IMR-90 (cell line): ENCODE measurements at regions of chrX and their contacts with region 1.

Region 1: GRCh38 chrX:11533211-11533651 is 132.5 kb downstream of the ARHGAP6 start:
- DNase-seq: peak; percentile 89
- ATAC-seq: peak; percentile 89
- H3K4me3 ChIP-seq: no peak overlapping the region
- H3K27ac ChIP-seq: no peak overlapping the region
- H3K4me1 ChIP-seq: peaks cover 2% of the 10 kb centered on the region; the same call in 1 of the 2 replicates
- H3K27me3 ChIP-seq: no peaks in the 10 kb centered on the region
- CTCF ChIP-seq: peak; percentile 99
- POLR2A ChIP-seq: no peak
- RAD21 ChIP-seq: peak; percentile 71

Region 2: GRCh38 chrX:11143931-11144678 is 389.1 kb before region 1 on chrX:
- CTCF ChIA-PET with region 1: interaction called, 4 read pairs
- POLR2A ChIA-PET with region 1: no interaction called
- dilution Hi-C with region 1: no loop called
- in situ Hi-C with region 1: loop called (anchors 5 kb)
- intact Hi-C with region 1: loop called (anchors 1 kb)
- DNase-seq: peak; percentile 79
- ATAC-seq: peak; percentile 90
- H3K4me3 ChIP-seq: no peak overlapping the region
- H3K27ac ChIP-seq: no peak overlapping the region
- H3K4me1 ChIP-seq: no peaks in the 10 kb centered on the region
- H3K27me3 ChIP-seq: no peaks in the 10 kb centered on the region
- CTCF ChIP-seq: peak; percentile 71
- POLR2A ChIP-seq: no peak
- RAD21 ChIP-seq: peak; percentile 83

Region 3: GRCh38 chrX:11381464-11381863 is 151.8 kb before region 1 on chrX:
- CTCF ChIA-PET with region 1: interaction called, 8 read pairs
- POLR2A ChIA-PET with region 1: no interaction called
- dilution Hi-C with region 1: no loop called
- in situ Hi-C with region 1: no loop called
- intact Hi-C with region 1: loop called (anchors 1 kb)
- DNase-seq: peak; percentile 63
- ATAC-seq: peak; percentile 75
- H3K4me3 ChIP-seq: no peak overlapping the region
- H3K27ac ChIP-seq: no peak overlapping the region
- H3K4me1 ChIP-seq: peaks cover 3% of the 10 kb centered on the region
- H3K27me3 ChIP-seq: no peaks in the 10 kb centered on the region
- CTCF ChIP-seq: peak; percentile 58
- POLR2A ChIP-seq: no peak
- RAD21 ChIP-seq: peak; percentile 58

Region 4: GRCh38 chrX:11461201-11462001 is 71.8 kb before region 1 on chrX:
- CTCF ChIA-PET with region 1: no interaction called
- POLR2A ChIA-PET with region 1: no interaction called
- dilution Hi-C with region 1: no loop called
- in situ Hi-C with region 1: no loop called
- intact Hi-C with region 1: loop called (anchors 2 kb)
- DNase-seq: peak; percentile 78
- ATAC-seq: peak; percentile 88
- H3K4me3 ChIP-seq: no peak overlapping the region
- H3K27ac ChIP-seq: peak overlapping the region; percentile 88
- H3K4me1 ChIP-seq: peaks cover 4% of the 10 kb centered on the region
- H3K27me3 ChIP-seq: no peaks in the 10 kb centered on the region
- CTCF ChIP-seq: no peak
- POLR2A ChIP-seq: no peak
- RAD21 ChIP-seq: peak; percentile 3; the same call in 1 of the 2 replicates

Region 5: GRCh38 chrX:11665144-11666111 is 132.2 kb after region 1 on chrX and contains the start of gene ARHGAP6:
- CTCF ChIA-PET with region 1: no interaction called
- POLR2A ChIA-PET with region 1: no interaction called
- dilution Hi-C with region 1: no loop called
- in situ Hi-C with region 1: no loop called
- intact Hi-C with region 1: loop called (anchors 10 kb)
- DNase-seq: peak; percentile 20
- ATAC-seq: peak; percentile 78
- H3K4me3 ChIP-seq: peak within 1 kb of the TSS; percentile 31
- H3K27ac ChIP-seq: no peak within 1 kb of the TSS
- H3K4me1 ChIP-seq: no peaks in the 10 kb centered on the region
- H3K27me3 ChIP-seq: peaks cover 16% of the 10 kb centered on the region
- CTCF ChIP-seq: no peak
- POLR2A ChIP-seq: no peak
- RAD21 ChIP-seq: no peak
- total RNA-seq, gene ARHGAP6: 1.1 and 1.8 TPM in 2 replicates

Region 6: GRCh38 chrX:11724122-11725017 is 191.1 kb after region 1 on chrX:
- CTCF ChIA-PET with region 1: interaction called, 3 read pairs
- POLR2A ChIA-PET with region 1: no interaction called
- dilution Hi-C with region 1: no loop called
- in situ Hi-C with region 1: loop called (anchors 5 kb)
- intact Hi-C with region 1: loop called (anchors 1 kb)
- DNase-seq: peak; percentile 41
- ATAC-seq: peak; percentile 70
- H3K4me3 ChIP-seq: no peak overlapping the region
- H3K27ac ChIP-seq: no peak overlapping the region
- H3K4me1 ChIP-seq: no peaks in the 10 kb centered on the region
- H3K27me3 ChIP-seq: no peaks in the 10 kb centered on the region
- CTCF ChIP-seq: peak; percentile 78
- POLR2A ChIP-seq: no peak
- RAD21 ChIP-seq: peak; percentile 53

Region 7: DNA sequence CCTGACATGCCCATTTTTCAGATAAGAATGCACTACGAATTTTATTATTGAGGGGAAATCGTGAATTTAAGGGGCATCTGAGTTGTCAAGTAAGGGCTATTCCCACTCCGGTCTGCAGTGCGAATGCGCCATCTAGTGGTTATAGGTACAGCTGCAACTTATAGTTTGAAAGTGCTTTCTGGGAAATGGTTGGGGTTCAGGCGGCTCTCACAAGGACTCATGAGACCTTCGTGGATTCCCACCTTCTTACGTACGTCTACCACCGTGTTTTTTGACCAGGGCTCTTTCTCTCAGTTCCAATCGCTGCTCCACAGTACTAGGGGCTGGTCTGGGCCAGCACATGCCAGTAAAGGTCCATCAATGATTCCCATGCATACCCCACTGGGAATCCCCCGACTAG is 237.1 kb after region 1 on chrX:
- CTCF ChIA-PET with region 1: no interaction called
- POLR2A ChIA-PET with region 1: no interaction called
- dilution Hi-C with region 1: no loop called
- in situ Hi-C with region 1: loop called (anchors 5 kb)
- intact Hi-C with region 1: loop called (anchors 1 kb)
- DNase-seq: peak; percentile 63
- ATAC-seq: peak; percentile 90
- H3K4me3 ChIP-seq: no peak overlapping the region
- H3K27ac ChIP-seq: no peak overlapping the region
- H3K4me1 ChIP-seq: no peaks in the 10 kb centered on the region
- H3K27me3 ChIP-seq: no peaks in the 10 kb centered on the region
- CTCF ChIP-seq: peak; percentile 89
- POLR2A ChIP-seq: no peak
- RAD21 ChIP-seq: peak; percentile 79